H1 (cell line): ENCODE measurements at regions of chr2 and their contacts with region 1.

Region 1: GRCh38 chr2:47336259-47337238 is 66.4 kb upstream of the MSH2 start:
- DNase-seq: no peak
- H3K4me3 ChIP-seq: no peak overlapping the region
- H3K27ac ChIP-seq: no peak overlapping the region
- H3K4me1 ChIP-seq: peaks cover 0 to 21% (median 11%) of the 10 kb centered on the region in 4 experiments
- H3K27me3 ChIP-seq: no peaks in the 10 kb centered on the region
- CTCF ChIP-seq: no peak
- EP300 ChIP-seq: no peak
- POLR2A ChIP-seq: no peak
- RAD21 ChIP-seq: no peak

Region 2: DNA sequence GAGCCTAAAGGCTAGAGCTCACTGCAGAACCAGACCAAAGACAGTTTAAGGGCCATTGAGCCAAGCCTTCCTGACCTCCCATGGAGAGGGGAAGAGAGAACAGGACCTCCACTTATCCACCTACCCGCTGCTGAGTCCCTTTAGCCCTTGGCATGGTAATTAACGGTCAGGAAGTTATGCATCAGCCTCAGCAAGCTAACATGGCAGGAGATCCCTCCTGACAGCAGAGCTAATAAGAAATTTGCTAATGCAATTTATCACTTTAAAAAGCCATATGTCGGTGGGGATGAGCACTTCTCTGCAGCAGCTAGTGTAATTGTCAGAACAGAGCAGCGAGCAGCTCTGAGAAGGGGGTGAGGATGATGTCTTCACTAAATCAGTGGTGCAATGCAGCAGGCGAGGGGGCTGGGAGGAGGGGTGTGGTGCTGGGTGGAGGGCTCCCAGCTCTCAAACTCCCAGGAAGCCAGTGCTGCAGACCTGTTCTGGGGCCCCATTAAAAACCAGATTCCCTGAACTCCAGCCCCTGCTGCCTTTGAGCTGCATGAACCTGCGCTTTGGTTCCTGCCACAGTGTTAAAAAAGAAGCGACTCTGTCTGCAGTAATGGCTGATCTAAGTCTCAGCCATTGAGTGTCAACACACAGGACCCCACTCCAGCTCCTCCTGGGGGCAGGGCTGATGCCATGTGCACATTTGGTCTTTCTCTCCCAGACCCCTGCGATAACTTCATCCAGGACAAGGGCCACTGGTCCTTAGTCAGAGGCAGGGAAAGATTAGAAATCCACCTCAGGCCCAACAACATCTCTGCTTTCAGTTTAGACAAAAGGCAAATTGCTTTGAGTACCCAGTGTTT is 97.2 kb before region 1 on chr2:
- CTCF ChIA-PET with region 1: no interaction called
- POLR2A ChIA-PET with region 1: no interaction called
- DNase-seq: no peak
- H3K4me3 ChIP-seq: no peak overlapping the region
- H3K27ac ChIP-seq: 0 out of 2 replicates have a peak overlapping the region, but pooled peaks have one; percentile 2
- H3K4me1 ChIP-seq: peaks cover 6 to 24% (median 15%) of the 10 kb centered on the region in 4 experiments
- H3K27me3 ChIP-seq: no peaks in the 10 kb centered on the region; a peak in 1 of 7 replicates
- CTCF ChIP-seq: no peak
- EP300 ChIP-seq: no peak
- POLR2A ChIP-seq: no peak
- RAD21 ChIP-seq: no peak

Region 3: DNA sequence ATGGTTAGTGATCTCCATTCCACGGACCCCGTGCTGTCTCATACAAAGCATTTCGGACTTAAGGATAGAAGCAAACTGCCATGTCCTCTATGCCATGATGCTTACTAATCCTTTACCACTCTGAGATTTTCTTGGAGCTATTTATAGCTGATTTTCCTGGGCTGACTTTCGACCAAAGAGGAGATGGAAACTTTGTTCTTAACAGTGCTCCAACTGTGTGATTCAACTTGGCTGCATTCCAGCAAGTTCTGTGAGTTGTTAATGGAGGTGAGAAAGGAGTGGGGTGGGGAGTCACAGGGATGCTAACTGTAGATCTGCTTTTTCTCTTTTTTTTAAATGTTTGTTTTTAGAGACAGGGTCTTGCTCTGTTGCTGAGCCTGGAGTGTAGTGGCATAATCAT is 20.9 kb after region 1 on chr2:
- CTCF ChIA-PET with region 1: interaction called, 14 read pairs
- POLR2A ChIA-PET with region 1: interaction called, 5 read pairs
- DNase-seq: no peak
- H3K4me3 ChIP-seq: no peak overlapping the region
- H3K27ac ChIP-seq: no peak overlapping the region
- H3K4me1 ChIP-seq: peaks cover 2 to 8% (median 5%) of the 10 kb centered on the region in 4 experiments; a peak in 5 of 7 replicates
- H3K27me3 ChIP-seq: 0 out of 7 replicates have a peak, but pooled peaks cover 0 to 3% (median 0%) of the 10 kb centered on the region in 4 experiments
- CTCF ChIP-seq: no peak
- EP300 ChIP-seq: no peak
- POLR2A ChIP-seq: no peak
- RAD21 ChIP-seq: no peak

Region 4: GRCh38 chr2:47373747-47374146 is 37.2 kb after region 1 on chr2:
- CTCF ChIA-PET with region 1: interaction called, 97 read pairs
- POLR2A ChIA-PET with region 1: interaction called, 5 read pairs
- DNase-seq: no peak
- H3K4me3 ChIP-seq: no peak overlapping the region
- H3K27ac ChIP-seq: no peak overlapping the region
- H3K4me1 ChIP-seq: peaks cover 0 to 3% (median 0%) of the 10 kb centered on the region in 4 experiments; a peak in 1 of 7 replicates
- H3K27me3 ChIP-seq: peaks cover 0 to 6% (median 2%) of the 10 kb centered on the region in 4 experiments; a peak in 2 of 7 replicates
- CTCF ChIP-seq: peak; percentile 62 to 70 (median 63)
- EP300 ChIP-seq: no peak
- POLR2A ChIP-seq: no peak
- RAD21 ChIP-seq: peak; percentile 84 to 88

Region 5: GRCh38 chr2:47386551-47386950 is 50.0 kb after region 1 on chr2:
- CTCF ChIA-PET with region 1: interaction called, 67 read pairs
- POLR2A ChIA-PET with region 1: interaction called, 21 read pairs
- DNase-seq: no peak
- H3K4me3 ChIP-seq: no peak overlapping the region
- H3K27ac ChIP-seq: no peak overlapping the region
- H3K4me1 ChIP-seq: no peaks in the 10 kb centered on the region
- H3K27me3 ChIP-seq: no peaks in the 10 kb centered on the region
- CTCF ChIP-seq: no peak
- EP300 ChIP-seq: no peak
- POLR2A ChIP-seq: no peak
- RAD21 ChIP-seq: no peak

Region 6: GRCh38 chr2:47429795-47430194 is 93.2 kb after region 1 on chr2:
- CTCF ChIA-PET with region 1: no interaction called
- POLR2A ChIA-PET with region 1: no interaction called
- DNase-seq: no peak
- H3K4me3 ChIP-seq: no peak overlapping the region
- H3K27ac ChIP-seq: no peak overlapping the region
- H3K4me1 ChIP-seq: no peaks in the 10 kb centered on the region
- H3K27me3 ChIP-seq: no peaks in the 10 kb centered on the region
- CTCF ChIP-seq: no peak
- EP300 ChIP-seq: no peak
- POLR2A ChIP-seq: no peak
- RAD21 ChIP-seq: no peak

Region 7: DNA sequence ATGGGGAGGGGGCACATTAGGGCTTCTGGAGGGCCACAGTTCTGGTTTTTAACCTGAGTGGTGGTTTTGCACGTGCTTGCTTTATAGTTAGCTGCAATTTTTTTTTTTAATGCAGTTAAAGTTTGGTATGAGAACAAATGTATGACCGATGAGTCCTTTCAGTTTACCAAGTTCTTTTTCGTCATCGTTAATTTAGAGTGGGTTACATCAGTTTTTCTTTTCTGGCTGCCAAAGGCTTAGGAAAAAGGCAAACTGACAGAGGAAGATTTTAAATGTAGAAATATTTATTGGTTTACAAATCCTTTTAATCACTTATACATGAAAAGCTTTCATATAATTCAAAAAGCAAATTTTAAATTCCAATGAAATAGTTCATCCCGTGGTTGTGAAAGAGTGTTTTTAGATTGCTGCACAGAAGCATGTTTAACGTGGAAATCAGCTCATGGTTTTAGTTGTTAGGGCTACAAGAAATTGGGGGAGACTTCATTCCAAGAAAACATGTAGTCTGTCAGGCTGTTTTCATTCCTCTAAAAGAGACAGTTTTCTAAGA is 149.3 kb after region 1 on chr2:
- CTCF ChIA-PET with region 1: no interaction called
- POLR2A ChIA-PET with region 1: no interaction called
- DNase-seq: no peak
- H3K4me3 ChIP-seq: no peak overlapping the region
- H3K27ac ChIP-seq: no peak overlapping the region
- H3K4me1 ChIP-seq: peaks cover 0 to 4% (median under 1%) of the 10 kb centered on the region in 4 experiments; a peak in 2 of 7 replicates
- H3K27me3 ChIP-seq: no peaks in the 10 kb centered on the region
- CTCF ChIP-seq: no peak
- EP300 ChIP-seq: no peak
- POLR2A ChIP-seq: no peak
- RAD21 ChIP-seq: no peak